Activated naive CD4-positive, alpha-beta T cell treated with anti-CD3 and anti-CD28 coated beads for 36 hours (primary cell): ENCODE measurements at regions of chr11 and their contacts with region 1.

Region 1: DNA sequence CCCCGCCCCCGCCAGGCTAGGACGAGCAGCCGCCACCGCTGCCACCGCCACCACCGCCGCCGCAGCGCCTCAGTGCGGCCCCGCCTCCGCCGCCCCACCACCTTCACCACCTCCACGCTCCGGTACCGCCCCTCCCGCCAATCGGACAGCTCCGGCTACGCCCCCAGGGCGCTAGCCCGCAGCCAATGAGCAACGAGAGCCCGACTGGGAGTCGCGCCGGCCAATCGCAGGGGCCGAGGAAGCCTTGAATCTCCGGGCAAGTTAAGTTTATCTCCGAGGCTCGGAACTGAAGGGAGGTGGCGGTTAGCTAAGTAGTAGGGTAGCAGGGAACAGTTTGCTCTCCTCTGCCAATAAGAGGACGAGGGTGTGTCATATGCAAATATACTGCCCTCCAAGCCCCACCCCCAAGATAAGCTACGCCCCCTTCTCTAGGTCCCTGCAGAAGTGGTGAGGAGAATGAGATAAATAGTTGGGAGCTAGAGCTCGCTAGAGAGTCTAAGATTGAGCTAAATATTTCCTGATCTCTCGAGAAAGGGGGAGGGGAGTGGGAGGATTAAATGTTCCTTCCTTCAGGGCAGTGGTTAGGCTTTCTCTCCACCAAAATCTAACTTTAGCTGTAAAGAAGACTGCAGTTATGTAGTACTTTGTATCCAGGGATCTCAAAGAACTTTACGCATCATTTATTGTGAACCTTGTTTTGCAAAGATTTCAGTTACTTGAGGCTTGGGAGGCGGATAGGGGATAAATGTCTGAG is at the start of gene SESN3:
- DNase-seq: peak; percentile 99
- H3K4me3 Mint-ChIP-seq: no peak within 1 kb of the TSS
- H3K27ac Mint-ChIP-seq: peak within 1 kb of the TSS; percentile 83
- H3K4me1 Mint-ChIP-seq: peaks cover 52% of the 10 kb centered on the region
- H3K27me3 Mint-ChIP-seq: no peaks in the 10 kb centered on the region
- total RNA-seq, gene SESN3: 17.5 to 18.1 TPM

Region 2: GRCh38 chr11:95100856-95101507 is 130.3 kb before region 1 on chr11:
- CTCF ChIA-PET with region 1: no interaction called
- intact Hi-C with region 1: no loop called
- DNase-seq: no peak
- H3K4me3 Mint-ChIP-seq: no peak overlapping the region
- H3K27ac Mint-ChIP-seq: no peak overlapping the region
- H3K4me1 Mint-ChIP-seq: peaks cover 18% of the 10 kb centered on the region
- H3K27me3 Mint-ChIP-seq: no peaks in the 10 kb centered on the region

Region 3: GRCh38 chr11:95150946-95151684 is 80.2 kb before region 1 on chr11:
- CTCF ChIA-PET with region 1: interaction called, 23 read pairs
- intact Hi-C with region 1: loop called (anchors 1 kb)
- DNase-seq: peak; percentile 96
- H3K4me3 Mint-ChIP-seq: peak overlapping the region; percentile 85
- H3K27ac Mint-ChIP-seq: peak overlapping the region; percentile 89
- H3K4me1 Mint-ChIP-seq: peaks cover 36% of the 10 kb centered on the region
- H3K27me3 Mint-ChIP-seq: peaks cover 5% of the 10 kb centered on the region

Region 4: GRCh38 chr11:95254131-95254704 is 22.9 kb after region 1 on chr11:
- CTCF ChIA-PET with region 1: interaction called, 29 read pairs
- intact Hi-C with region 1: loop called (anchors 1 kb)
- DNase-seq: peak; percentile 95
- H3K4me3 Mint-ChIP-seq: peak overlapping the region; percentile 83
- H3K27ac Mint-ChIP-seq: peak overlapping the region; percentile 92
- H3K4me1 Mint-ChIP-seq: peaks cover 47% of the 10 kb centered on the region
- H3K27me3 Mint-ChIP-seq: no peaks in the 10 kb centered on the region

Region 5: DNA sequence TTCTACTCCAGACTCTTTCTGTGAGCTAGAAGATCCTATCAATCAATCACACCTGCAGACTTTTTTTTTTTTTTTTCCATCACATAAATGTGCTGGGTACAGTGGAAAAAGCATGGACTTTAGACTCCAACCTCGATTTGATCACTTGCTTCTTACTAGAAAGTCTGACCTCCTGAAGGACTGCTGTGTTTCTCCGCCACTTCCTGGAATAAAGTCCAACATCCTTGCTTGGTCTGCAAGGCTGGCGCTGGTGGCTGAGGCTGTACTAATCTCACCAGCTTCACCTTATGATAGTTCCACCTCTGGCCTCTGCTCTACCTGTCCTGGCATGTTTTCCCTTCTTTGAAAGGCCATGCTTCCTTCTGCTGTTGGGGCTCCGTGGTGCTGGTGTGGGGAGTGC is 60.6 kb after region 1 on chr11:
- CTCF ChIA-PET with region 1: no interaction called
- intact Hi-C with region 1: no loop called
- DNase-seq: no peak
- H3K4me3 Mint-ChIP-seq: no peak overlapping the region
- H3K27ac Mint-ChIP-seq: no peak overlapping the region
- H3K4me1 Mint-ChIP-seq: no peaks in the 10 kb centered on the region
- H3K27me3 Mint-ChIP-seq: no peaks in the 10 kb centered on the region

Region 6: GRCh38 chr11:95375886-95376285 is 144.6 kb after region 1 on chr11:
- CTCF ChIA-PET with region 1: interaction called, 4 read pairs
- intact Hi-C with region 1: loop called (anchors 1 kb)
- DNase-seq: no peak
- H3K4me3 Mint-ChIP-seq: no peak overlapping the region
- H3K27ac Mint-ChIP-seq: no peak overlapping the region
- H3K4me1 Mint-ChIP-seq: peaks cover 2% of the 10 kb centered on the region
- H3K27me3 Mint-ChIP-seq: no peaks in the 10 kb centered on the region

Region 7: DNA sequence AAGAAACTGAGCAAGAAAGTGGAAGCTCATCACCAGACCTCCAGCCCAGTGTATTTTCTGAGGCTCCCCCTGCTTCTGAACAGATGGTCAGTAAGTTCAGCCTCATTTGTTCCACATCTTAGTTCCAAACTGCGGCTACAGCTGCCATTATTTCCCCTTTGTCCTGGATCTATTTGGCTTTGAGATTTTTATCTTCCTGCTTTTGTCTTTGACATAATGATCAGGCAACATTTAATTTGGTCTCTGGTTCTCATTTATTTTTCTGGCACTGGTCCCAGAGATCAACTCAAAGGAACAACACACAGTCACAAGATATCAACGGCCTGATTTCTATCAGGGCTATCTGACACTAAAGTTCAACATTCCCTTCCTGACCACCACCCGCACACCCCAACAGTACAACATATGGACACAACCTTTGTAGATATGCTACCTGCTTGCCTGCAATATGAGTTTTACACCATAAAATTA is 420.7 kb after region 1 on chr11:
- CTCF ChIA-PET with region 1: no interaction called
- intact Hi-C with region 1: no loop called
- DNase-seq: no peak
- H3K4me3 Mint-ChIP-seq: no peak overlapping the region
- H3K27ac Mint-ChIP-seq: no peak overlapping the region
- H3K4me1 Mint-ChIP-seq: peaks cover 7% of the 10 kb centered on the region
- H3K27me3 Mint-ChIP-seq: no peaks in the 10 kb centered on the region

Region 8: DNA sequence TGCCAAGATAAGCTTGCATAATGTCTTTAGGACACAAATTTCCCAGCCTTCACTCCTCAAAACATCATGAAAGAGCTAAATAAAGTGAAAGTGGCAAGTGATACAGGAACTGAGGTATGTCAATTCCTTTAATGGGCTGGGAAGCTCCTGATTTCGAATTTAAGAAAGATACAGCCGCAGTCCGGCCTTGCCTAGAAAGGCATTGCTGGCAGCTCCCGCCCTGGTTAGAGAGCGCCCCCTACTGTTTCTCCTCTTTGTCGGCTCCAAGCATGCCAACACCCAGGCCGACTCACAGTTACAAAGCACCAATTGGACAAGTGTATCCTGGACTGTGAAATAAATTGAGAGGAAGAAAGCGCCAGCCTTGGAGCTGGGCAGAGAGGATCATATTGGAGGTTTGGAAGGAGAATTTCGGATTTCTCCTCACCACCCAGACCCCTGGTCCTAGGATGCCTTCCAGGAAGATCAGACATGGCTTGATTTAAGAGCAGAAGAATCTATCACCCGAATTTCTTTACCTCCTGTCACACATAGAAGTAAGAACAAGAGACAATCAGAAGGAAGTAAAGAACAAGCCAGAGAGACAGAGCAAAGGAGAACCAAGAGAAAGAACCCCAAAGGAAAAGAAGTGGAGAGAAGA is 474.3 kb after region 1 on chr11:
- CTCF ChIA-PET with region 1: interaction called, 27 read pairs
- intact Hi-C with region 1: loop called (anchors 1 kb)
- DNase-seq: peak; percentile 95
- H3K4me3 Mint-ChIP-seq: no peak overlapping the region
- H3K27ac Mint-ChIP-seq: no peak overlapping the region
- H3K4me1 Mint-ChIP-seq: peaks cover 16% of the 10 kb centered on the region
- H3K27me3 Mint-ChIP-seq: no peaks in the 10 kb centered on the region

Region 9: DNA sequence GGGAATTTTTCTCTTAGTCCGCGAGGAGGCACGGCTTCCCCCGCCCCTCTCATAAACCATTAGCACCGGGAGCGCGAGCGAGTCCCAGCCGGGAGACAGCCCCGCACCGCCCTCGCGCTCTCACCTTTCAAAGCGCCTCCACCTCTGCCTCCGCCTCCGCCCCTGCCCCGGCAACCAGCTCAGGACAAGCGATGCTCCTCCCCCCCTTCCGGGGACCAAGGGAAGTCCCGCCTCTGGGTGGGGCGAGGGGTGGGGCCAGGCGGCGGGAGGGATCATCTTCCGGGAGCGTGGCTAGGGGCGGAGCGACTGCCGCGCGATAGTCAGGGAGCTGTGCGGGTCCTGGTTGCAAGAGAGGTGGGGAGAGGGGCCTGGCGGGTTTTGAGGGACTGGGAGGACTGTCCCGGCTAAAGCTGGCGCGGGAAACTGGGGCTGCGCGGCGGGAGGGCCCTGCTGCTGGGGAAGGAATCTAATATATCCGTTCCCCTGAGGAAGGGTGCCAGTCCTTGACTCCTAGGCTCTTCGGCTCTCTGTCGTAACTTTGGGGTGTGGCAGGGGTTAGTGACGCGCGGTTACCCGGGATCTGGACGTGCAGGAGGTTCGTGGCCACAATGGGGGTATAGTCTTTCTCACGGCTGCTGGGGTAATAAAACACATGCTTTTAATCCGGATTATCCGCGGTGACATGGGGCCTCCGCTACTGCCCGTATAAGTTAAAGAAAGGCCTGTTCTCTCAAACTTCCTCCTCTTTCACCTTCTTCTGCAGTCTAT is 1158.6 kb after region 1 on chr11 and contains the starts of genes CCDC82 and JRKL:
- CTCF ChIA-PET with region 1: no interaction called
- intact Hi-C with region 1: loop called (anchors 10 kb)
- DNase-seq: peak; percentile 99
- H3K4me3 Mint-ChIP-seq: peak within 1 kb of the TSS; percentile 89
- H3K27ac Mint-ChIP-seq: peak within 1 kb of the TSS; percentile 91
- H3K4me1 Mint-ChIP-seq: peaks cover 58% of the 10 kb centered on the region
- H3K27me3 Mint-ChIP-seq: no peaks in the 10 kb centered on the region
- total RNA-seq, gene CCDC82: 32.0 to 34.0 TPM
- total RNA-seq, gene JRKL: 12.3 to 12.7 TPM